GM12878 (cell line): ENCODE measurements at regions of chr12 and their contacts with region 1.

Region 1: DNA sequence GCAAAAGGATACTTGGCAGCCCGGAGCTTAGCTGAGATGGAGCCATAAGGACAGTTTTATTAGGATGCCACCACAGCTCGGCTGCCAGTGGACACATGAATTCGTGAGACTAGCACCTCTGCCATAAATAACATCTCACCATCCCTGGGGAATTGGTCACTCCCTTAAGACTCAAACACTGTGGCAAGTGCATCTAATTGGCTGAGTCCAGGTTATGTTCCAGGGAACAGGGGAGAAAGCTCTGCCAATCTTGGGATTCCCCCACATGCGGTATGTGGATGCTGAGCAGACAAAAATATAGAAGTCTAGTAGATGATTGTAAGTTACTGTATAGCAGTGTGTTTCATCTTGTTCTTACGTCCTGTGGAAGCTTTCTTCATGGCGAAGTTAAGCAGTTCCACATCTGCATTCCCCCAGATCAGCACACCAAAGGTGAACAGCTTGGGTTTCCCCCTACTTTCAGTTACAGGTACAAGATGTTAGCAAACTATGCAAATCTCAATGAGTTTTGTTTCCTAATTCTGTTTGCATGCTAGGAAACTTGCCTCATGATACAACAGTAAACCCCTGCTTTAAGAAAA is 131.1 kb downstream of the ETV6 start:
- DNase-seq: peak; percentile 94
- ATAC-seq: peak; percentile 79
- H3K4me3 ChIP-seq: peak overlapping the region; percentile 13; the same call in 1 of the 2 replicates
- H3K27ac ChIP-seq: peak overlapping the region; percentile 95
- H3K4me1 ChIP-seq: peaks cover 67% of the 10 kb centered on the region
- H3K27me3 ChIP-seq: no peaks in the 10 kb centered on the region
- CTCF ChIP-seq: no peak
- EP300 ChIP-seq: peak; percentile 67 to 91; a peak in 2 of 4 replicates
- POLR2A ChIP-seq: peak; percentile 48; the same call in 1 of the 2 replicates
- RAD21 ChIP-seq: 0 out of 2 replicates have a peak, but pooled peaks have one; percentile 3

Region 2: DNA sequence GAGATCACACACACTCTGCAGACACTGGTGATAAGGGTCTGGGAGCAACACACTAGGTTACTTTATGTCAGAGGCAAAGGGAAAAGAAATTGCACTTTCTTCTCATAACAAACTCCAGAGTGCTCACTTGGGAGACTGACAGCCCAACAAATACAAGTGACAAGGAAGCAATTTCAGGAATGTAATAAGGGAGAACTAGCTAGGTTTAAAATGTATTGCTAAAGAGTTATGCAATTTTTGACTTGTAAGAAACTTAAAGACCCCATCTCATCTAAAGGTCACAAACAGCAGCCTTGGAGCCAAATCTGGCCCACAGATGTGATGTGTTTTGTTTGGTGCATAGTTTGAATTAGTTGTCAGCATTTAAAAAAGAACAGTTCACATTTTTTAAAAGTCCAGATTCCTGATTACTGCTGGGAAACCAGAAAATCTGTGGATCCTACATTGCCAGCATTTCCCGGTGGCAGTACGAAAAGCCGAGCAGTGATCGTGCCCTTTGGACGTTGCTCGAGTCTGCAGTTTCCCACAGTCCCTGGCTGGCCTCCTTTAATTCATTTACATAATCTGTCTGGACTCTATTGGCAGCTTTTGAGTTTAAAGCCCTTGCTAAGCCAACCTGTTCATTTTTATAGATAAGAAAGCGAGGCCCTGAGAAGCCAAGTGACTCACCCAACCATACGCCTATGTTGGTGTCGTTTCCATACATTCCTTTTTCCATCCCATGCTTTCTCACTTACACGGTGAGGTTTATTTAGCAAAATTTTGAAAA is 173.1 kb before region 1 on chr12:
- CTCF ChIA-PET with region 1: no interaction called
- POLR2A ChIA-PET with region 1: no interaction called
- RAD21 ChIA-PET with region 1: no interaction called
- SMC1A ChIA-PET with region 1: no interaction called
- in situ Hi-C with region 1: no loop called
- intact Hi-C with region 1: no loop called
- DNase-seq: no peak
- ATAC-seq: no peak
- H3K4me3 ChIP-seq: no peak overlapping the region
- H3K27ac ChIP-seq: no peak overlapping the region
- H3K4me1 ChIP-seq: 0 out of 2 replicates have a peak, but pooled peaks cover under 1% of the 10 kb centered on the region
- H3K27me3 ChIP-seq: no peaks in the 10 kb centered on the region
- CTCF ChIP-seq: no peak
- EP300 ChIP-seq: no peak
- POLR2A ChIP-seq: no peak
- RAD21 ChIP-seq: no peak

Region 3: DNA sequence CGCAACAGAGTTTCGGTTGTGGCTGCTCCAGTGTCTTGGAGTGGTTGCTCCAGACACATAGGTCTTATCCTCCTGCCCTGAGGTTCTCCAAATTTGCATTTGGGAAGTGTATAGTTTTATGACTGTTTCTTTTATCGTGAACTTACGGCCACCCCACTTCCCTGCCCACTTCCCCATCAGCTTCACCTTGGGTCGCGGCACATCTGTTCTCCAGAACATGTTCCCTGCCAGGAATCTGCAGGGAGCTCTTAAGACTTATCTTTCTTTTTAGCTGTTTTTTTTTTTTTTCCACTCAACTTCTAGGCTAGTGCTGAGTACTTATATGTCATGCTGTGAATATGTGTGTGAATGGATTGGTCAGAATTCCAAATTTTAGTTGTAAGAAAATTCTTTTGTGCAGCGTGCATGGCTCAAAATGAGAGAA is 55.7 kb before region 1 on chr12:
- CTCF ChIA-PET with region 1: interaction called, 4 read pairs
- POLR2A ChIA-PET with region 1: interaction called, 10 read pairs
- RAD21 ChIA-PET with region 1: interaction called, 39 read pairs
- SMC1A ChIA-PET with region 1: interaction called, 12 read pairs
- in situ Hi-C with region 1: no loop called
- intact Hi-C with region 1: no loop called
- DNase-seq: no peak
- ATAC-seq: no peak
- H3K4me3 ChIP-seq: peak overlapping the region; percentile 8; the same call in 1 of the 2 replicates
- H3K27ac ChIP-seq: peak overlapping the region; percentile 89
- H3K4me1 ChIP-seq: peaks cover 98% of the 10 kb centered on the region
- H3K27me3 ChIP-seq: no peaks in the 10 kb centered on the region
- CTCF ChIP-seq: no peak
- EP300 ChIP-seq: no peak
- POLR2A ChIP-seq: no peak
- RAD21 ChIP-seq: no peak

Region 4: GRCh38 chr12:11805043-11805442 is 24.4 kb after region 1 on chr12:
- CTCF ChIA-PET with region 1: interaction called, 8 read pairs
- POLR2A ChIA-PET with region 1: interaction called, 7 read pairs
- RAD21 ChIA-PET with region 1: interaction called, 37 read pairs
- SMC1A ChIA-PET with region 1: interaction called, 58 read pairs
- in situ Hi-C with region 1: no loop called
- intact Hi-C with region 1: no loop called
- DNase-seq: no peak
- ATAC-seq: no peak
- H3K4me3 ChIP-seq: no peak overlapping the region
- H3K27ac ChIP-seq: 0 out of 2 replicates have a peak overlapping the region, but pooled peaks have one; percentile 6
- H3K4me1 ChIP-seq: peaks cover 39% of the 10 kb centered on the region
- H3K27me3 ChIP-seq: no peaks in the 10 kb centered on the region
- CTCF ChIP-seq: peak in 1 of 3 experiments; percentile 30; a peak in 1 of 6 replicates
- EP300 ChIP-seq: no peak
- POLR2A ChIP-seq: no peak
- RAD21 ChIP-seq: peak; percentile 25; the same call in 1 of the 2 replicates

Region 5: GRCh38 chr12:11827091-11828061 is 46.8 kb after region 1 on chr12:
- CTCF ChIA-PET with region 1: interaction called, 3 read pairs
- POLR2A ChIA-PET with region 1: interaction called, 4 read pairs
- RAD21 ChIA-PET with region 1: interaction called, 56 read pairs
- SMC1A ChIA-PET with region 1: interaction called, 43 read pairs
- in situ Hi-C with region 1: no loop called
- intact Hi-C with region 1: no loop called
- DNase-seq: no peak
- ATAC-seq: no peak
- H3K4me3 ChIP-seq: no peak overlapping the region
- H3K27ac ChIP-seq: 0 out of 2 replicates have a peak overlapping the region, but pooled peaks have one; percentile 6
- H3K4me1 ChIP-seq: peaks cover 64% of the 10 kb centered on the region
- H3K27me3 ChIP-seq: no peaks in the 10 kb centered on the region
- CTCF ChIP-seq: no peak
- EP300 ChIP-seq: no peak
- POLR2A ChIP-seq: no peak
- RAD21 ChIP-seq: no peak

Region 6: GRCh38 chr12:11927286-11927935 is 146.8 kb after region 1 on chr12:
- CTCF ChIA-PET with region 1: no interaction called
- POLR2A ChIA-PET with region 1: no interaction called
- RAD21 ChIA-PET with region 1: no interaction called
- SMC1A ChIA-PET with region 1: no interaction called
- in situ Hi-C with region 1: no loop called
- intact Hi-C with region 1: no loop called
- DNase-seq: no peak
- ATAC-seq: no peak
- H3K4me3 ChIP-seq: no peak overlapping the region
- H3K27ac ChIP-seq: no peak overlapping the region
- H3K4me1 ChIP-seq: no peaks in the 10 kb centered on the region
- H3K27me3 ChIP-seq: no peaks in the 10 kb centered on the region
- CTCF ChIP-seq: no peak
- EP300 ChIP-seq: no peak
- POLR2A ChIP-seq: no peak
- RAD21 ChIP-seq: no peak